SK-N-SH (cell line): ENCODE measurements at regions of chr3 and their contacts with region 1.

Region 1: GRCh38 chr3:123723522-123724168 is 138.8 kb upstream of the HACD2 start:
- DNase-seq: peak; percentile 67
- H3K4me3 ChIP-seq: no peak overlapping the region; a peak in 1 of 4 replicates
- H3K27ac ChIP-seq: peak overlapping the region; percentile 44 to 64; a peak in 3 of 4 replicates
- H3K4me1 ChIP-seq: peaks cover 23 to 41% of the 10 kb centered on the region in 2 experiments; a peak in 3 of 4 replicates
- H3K27me3 ChIP-seq: no peaks in the 10 kb centered on the region
- CTCF ChIP-seq: peak; percentile 87
- EP300 ChIP-seq: no peak
- RAD21 ChIP-seq: peak; percentile 69

Region 2: GRCh38 chr3:123535580-123535979 is 188.1 kb before region 1 on chr3:
- CTCF ChIA-PET with region 1: no interaction called
- POLR2A ChIA-PET with region 1: no interaction called
- DNase-seq: no peak
- H3K4me3 ChIP-seq: no peak overlapping the region
- H3K27ac ChIP-seq: peak overlapping the region in 1 of 2 experiments; percentile 54; a peak in 2 of 4 replicates
- H3K4me1 ChIP-seq: peaks cover 0 to 6% of the 10 kb centered on the region in 2 experiments; a peak in 1 of 4 replicates
- H3K27me3 ChIP-seq: no peaks in the 10 kb centered on the region
- CTCF ChIP-seq: no peak
- EP300 ChIP-seq: no peak
- RAD21 ChIP-seq: no peak

Region 3: GRCh38 chr3:123618768-123619484 is 104.7 kb before region 1 on chr3:
- CTCF ChIA-PET with region 1: no interaction called
- POLR2A ChIA-PET with region 1: no interaction called
- DNase-seq: no peak
- H3K4me3 ChIP-seq: no peak overlapping the region
- H3K27ac ChIP-seq: peak overlapping the region in 1 of 2 experiments; percentile 5; a peak in 1 of 4 replicates
- H3K4me1 ChIP-seq: peaks cover 8 to 27% of the 10 kb centered on the region in 2 experiments; a peak in 3 of 4 replicates
- H3K27me3 ChIP-seq: no peaks in the 10 kb centered on the region
- CTCF ChIP-seq: no peak
- EP300 ChIP-seq: no peak
- RAD21 ChIP-seq: no peak

Region 4: DNA sequence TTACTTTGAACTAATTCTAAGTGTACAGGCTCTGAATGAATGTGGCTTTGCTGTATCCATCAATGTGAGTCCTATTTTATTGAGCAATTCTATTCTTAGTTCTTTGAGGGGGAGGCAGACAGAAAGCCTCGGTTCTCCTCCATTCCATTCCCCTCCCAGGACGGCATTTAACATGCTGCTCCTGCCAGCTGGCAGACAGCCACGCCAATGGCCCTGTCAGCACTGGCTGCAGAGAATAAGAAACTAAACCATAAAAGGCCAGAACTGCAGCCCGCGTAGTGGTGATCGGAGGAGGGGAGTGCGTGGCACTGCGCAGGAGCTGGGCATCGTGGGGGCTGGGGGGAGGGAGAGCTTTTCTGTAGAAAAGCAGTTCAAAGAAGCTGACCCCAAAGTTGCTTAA is 62.7 kb before region 1 on chr3:
- CTCF ChIA-PET with region 1: interaction called, 119 read pairs
- POLR2A ChIA-PET with region 1: no interaction called
- DNase-seq: peak; percentile 75
- H3K4me3 ChIP-seq: no peak overlapping the region
- H3K27ac ChIP-seq: peak overlapping the region; percentile 73 to 80
- H3K4me1 ChIP-seq: peaks cover 33 to 38% of the 10 kb centered on the region in 2 experiments
- H3K27me3 ChIP-seq: no peaks in the 10 kb centered on the region
- CTCF ChIP-seq: no peak
- EP300 ChIP-seq: peak; percentile 57 to 90; a peak in 3 of 4 replicates
- RAD21 ChIP-seq: no peak; the same call in 1 of the 2 replicates

Region 5: GRCh38 chr3:123712077-123712860 is 11.4 kb before region 1 on chr3:
- CTCF ChIA-PET with region 1: interaction called, 38 read pairs
- POLR2A ChIA-PET with region 1: no interaction called
- DNase-seq: no peak
- H3K4me3 ChIP-seq: no peak overlapping the region
- H3K27ac ChIP-seq: no peak overlapping the region
- H3K4me1 ChIP-seq: peaks cover 0 to 18% of the 10 kb centered on the region in 2 experiments; a peak in 2 of 4 replicates
- H3K27me3 ChIP-seq: no peaks in the 10 kb centered on the region
- CTCF ChIP-seq: no peak
- EP300 ChIP-seq: no peak
- RAD21 ChIP-seq: no peak

Region 6: GRCh38 chr3:123750659-123751420 is 27.2 kb after region 1 on chr3:
- CTCF ChIA-PET with region 1: interaction called, 13 read pairs
- POLR2A ChIA-PET with region 1: no interaction called
- DNase-seq: no peak
- H3K4me3 ChIP-seq: no peak overlapping the region
- H3K27ac ChIP-seq: peak overlapping the region; percentile 86 to 91
- H3K4me1 ChIP-seq: peaks cover 11 to 42% of the 10 kb centered on the region in 2 experiments
- H3K27me3 ChIP-seq: no peaks in the 10 kb centered on the region
- CTCF ChIP-seq: 0 out of 2 replicates have a peak, but pooled peaks have one; percentile 16
- EP300 ChIP-seq: peak in 1 of 2 experiments; percentile 96; a peak in 2 of 4 replicates
- RAD21 ChIP-seq: no peak

Region 7: DNA sequence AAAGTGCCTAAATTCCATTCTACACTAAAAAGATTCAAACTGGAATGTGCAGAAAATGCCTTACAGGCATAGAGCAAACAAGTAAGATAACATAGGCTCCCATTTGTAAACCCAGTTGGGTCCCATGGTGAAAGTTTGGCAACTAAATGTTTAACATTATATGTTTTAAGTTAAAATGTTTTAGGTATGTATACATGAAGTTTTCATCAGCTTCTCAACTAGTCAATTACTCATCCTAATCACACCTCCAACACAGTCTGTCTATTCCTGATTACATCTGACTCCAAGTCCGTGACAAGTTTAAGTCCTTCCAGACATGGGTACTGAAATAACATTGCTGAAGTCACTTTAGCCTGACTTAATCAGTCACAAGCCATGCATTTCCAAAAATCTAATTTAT is 135.5 kb after region 1 on chr3:
- CTCF ChIA-PET with region 1: no interaction called
- POLR2A ChIA-PET with region 1: no interaction called
- DNase-seq: peak; percentile 22
- H3K4me3 ChIP-seq: no peak overlapping the region
- H3K27ac ChIP-seq: peak overlapping the region; percentile 61 to 76; a peak in 3 of 4 replicates
- H3K4me1 ChIP-seq: peaks cover 0 to 10% of the 10 kb centered on the region in 2 experiments; a peak in 2 of 4 replicates
- H3K27me3 ChIP-seq: no peaks in the 10 kb centered on the region
- CTCF ChIP-seq: no peak
- EP300 ChIP-seq: no peak
- RAD21 ChIP-seq: no peak